ENCODE measurements at regions of chr13 and their contacts with region 1.

Region 1: GRCh38 chr13:84917252-84917878 is 881.9 kb downstream of the SLITRK6 start:
- DNase-seq: no peak
- ATAC-seq: no peak
- H3K4me3 ChIP-seq: no peak overlapping the region
- H3K27ac ChIP-seq: no peak overlapping the region
- H3K4me1 ChIP-seq: no peaks in the 10 kb centered on the region
- H3K27me3 ChIP-seq: no peaks in the 10 kb centered on the region
- CTCF ChIP-seq: peak; percentile 52

Region 2: GRCh38 chr13:85806553-85807175 is 889.3 kb after region 1 on chr13:
- intact Hi-C with region 1: loop called (anchors 10 kb)
- DNase-seq: no peak
- ATAC-seq: peak; percentile 34
- H3K4me3 ChIP-seq: no peak overlapping the region
- H3K27ac ChIP-seq: no peak overlapping the region
- H3K4me1 ChIP-seq: no peaks in the 10 kb centered on the region
- H3K27me3 ChIP-seq: no peaks in the 10 kb centered on the region
- CTCF ChIP-seq: peak; percentile 68

Measured in upper lobe of right lung (tissue), 1 donor.